ENCODE measurements at regions of chr11 and their contacts with region 1.

Region 1: GRCh38 chr11:126480410-126481302 is 125.2 kb downstream of the ST3GAL4 start:
- DNase-seq: peak; percentile 86 to 95 (median 88)
- H3K4me3 ChIP-seq: peak overlapping the region in 1 of 3 donors; percentile 9
- H3K27ac ChIP-seq: peak overlapping the region in 1 of 2 donors; percentile 2
- H3K4me1 ChIP-seq: peaks cover 0 to 6% (median 0%) of the 10 kb centered on the region in 3 donors
- H3K27me3 ChIP-seq: no peaks in the 10 kb centered on the region
- CTCF ChIP-seq: peak; percentile 95

Region 2: GRCh38 chr11:125842321-125842948 is 638.2 kb before region 1 on chr11:
- intact Hi-C with region 1: no loop called
- DNase-seq: no peak
- H3K4me3 ChIP-seq: no peak overlapping the region
- H3K27ac ChIP-seq: no peak overlapping the region
- H3K4me1 ChIP-seq: no peaks in the 10 kb centered on the region
- H3K27me3 ChIP-seq: no peaks in the 10 kb centered on the region
- CTCF ChIP-seq: no peak

Region 3: GRCh38 chr11:126310228-126310991 is 170.2 kb before region 1 on chr11:
- intact Hi-C with region 1: loop called (anchors 5 kb)
- DNase-seq: peak; percentile 81 to 91 (median 84)
- H3K4me3 ChIP-seq: no peak overlapping the region
- H3K27ac ChIP-seq: no peak overlapping the region
- H3K4me1 ChIP-seq: peaks cover 0 to 4% (median 0%) of the 10 kb centered on the region in 3 donors
- H3K27me3 ChIP-seq: no peaks in the 10 kb centered on the region
- CTCF ChIP-seq: peak; percentile 90

Region 4: GRCh38 chr11:126431401-126432064 is 49.1 kb before region 1 on chr11:
- intact Hi-C with region 1: no loop called
- DNase-seq: no peak
- H3K4me3 ChIP-seq: no peak overlapping the region
- H3K27ac ChIP-seq: no peak overlapping the region
- H3K4me1 ChIP-seq: no peaks in the 10 kb centered on the region
- H3K27me3 ChIP-seq: no peaks in the 10 kb centered on the region
- CTCF ChIP-seq: no peak

Region 5: DNA sequence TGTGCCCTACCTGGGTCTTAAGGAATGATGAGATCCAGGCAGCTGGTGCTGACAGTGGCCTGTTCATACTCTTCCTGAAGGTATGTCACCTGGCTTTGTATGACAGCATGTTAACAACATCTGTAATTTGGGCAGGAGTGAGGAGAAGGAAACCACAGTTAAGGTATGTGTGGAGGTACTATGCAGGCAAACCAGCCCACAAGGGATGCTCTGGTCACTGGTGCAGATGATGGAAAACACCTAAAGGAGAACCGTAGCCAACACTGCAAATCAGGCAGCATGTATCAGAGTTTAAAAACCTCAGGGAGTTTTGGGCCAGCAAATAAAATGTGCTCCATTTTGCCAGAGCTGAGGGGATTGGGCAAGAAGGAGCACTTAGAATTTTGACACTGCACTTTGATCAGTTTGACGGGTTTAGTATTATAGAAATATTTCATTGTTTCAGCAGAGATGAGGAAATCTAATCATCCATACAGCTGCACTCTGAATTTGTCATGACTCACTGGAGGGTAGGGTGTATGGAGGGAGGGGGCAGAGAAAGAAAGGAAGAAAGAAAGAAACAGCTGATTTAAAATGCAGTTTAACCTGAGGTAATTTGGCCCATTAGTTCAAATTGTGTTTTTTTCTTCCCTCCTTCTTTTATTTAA is 259.0 kb after region 1 on chr11:
- intact Hi-C with region 1: no loop called
- DNase-seq: peak in 1 of 5 donors; percentile 43
- H3K4me3 ChIP-seq: no peak overlapping the region
- H3K27ac ChIP-seq: no peak overlapping the region
- H3K4me1 ChIP-seq: no peaks in the 10 kb centered on the region
- H3K27me3 ChIP-seq: no peaks in the 10 kb centered on the region
- CTCF ChIP-seq: no peak